ENCODE measurements at regions of chr2 and their contacts with region 1.

Region 1: GRCh38 chr2:136255648-136256463 is 137.9 kb upstream of the CXCR4 start:
- DNase-seq: peak; percentile 78
- ATAC-seq: peak; percentile 69
- H3K4me3 ChIP-seq: no peak overlapping the region
- H3K4me3 Mint-ChIP-seq: peak overlapping the region; percentile 64
- H3K27ac ChIP-seq: peak overlapping the region; percentile 43 to 74
- H3K27ac Mint-ChIP-seq: peak overlapping the region; percentile 92
- H3K4me1 ChIP-seq: peaks cover 55% of the 10 kb centered on the region in 2 donors
- H3K4me1 Mint-ChIP-seq: peaks cover 91% of the 10 kb centered on the region
- H3K27me3 ChIP-seq: no peaks in the 10 kb centered on the region
- H3K27me3 Mint-ChIP-seq: no peaks in the 10 kb centered on the region
- CTCF ChIP-seq: peak; percentile 24

Region 2: DNA sequence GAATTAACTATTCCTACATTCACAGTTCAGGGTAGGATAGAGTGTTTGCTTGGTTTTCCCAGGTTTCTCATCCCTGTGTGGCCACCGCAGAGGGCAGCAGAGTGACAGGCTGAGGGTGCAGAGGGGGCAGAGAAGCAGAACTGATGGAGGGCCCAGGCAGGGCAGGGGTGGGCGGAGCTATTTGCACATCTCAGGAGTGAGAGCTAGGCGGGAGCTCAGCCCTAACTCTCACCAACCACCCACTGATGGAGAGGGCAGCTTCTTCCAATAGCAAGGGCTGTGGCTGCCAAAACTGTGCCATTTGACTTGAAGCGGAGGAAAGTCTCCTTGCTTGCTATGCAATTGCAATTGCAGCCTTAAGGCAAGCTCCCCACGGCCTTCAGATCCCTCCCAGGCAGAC is 258.5 kb before region 1 on chr2:
- CTCF ChIA-PET with region 1: interaction called, 12 read pairs
- POLR2A ChIA-PET with region 1: no interaction called
- intact Hi-C with region 1: no loop called
- DNase-seq: peak; percentile 83
- ATAC-seq: peak; percentile 95
- H3K4me3 ChIP-seq: peak overlapping the region in 3 of 5 experiments; percentile 8 to 17 (median 10)
- H3K4me3 Mint-ChIP-seq: peak overlapping the region; percentile 74
- H3K27ac ChIP-seq: peak overlapping the region; percentile 47 to 50
- H3K27ac Mint-ChIP-seq: peak overlapping the region; percentile 79
- H3K4me1 ChIP-seq: peaks cover 52 to 57% of the 10 kb centered on the region in 2 donors
- H3K4me1 Mint-ChIP-seq: peaks cover 51% of the 10 kb centered on the region
- H3K27me3 ChIP-seq: no peaks in the 10 kb centered on the region
- H3K27me3 Mint-ChIP-seq: no peaks in the 10 kb centered on the region
- CTCF ChIP-seq: peak; percentile 26

Region 3: DNA sequence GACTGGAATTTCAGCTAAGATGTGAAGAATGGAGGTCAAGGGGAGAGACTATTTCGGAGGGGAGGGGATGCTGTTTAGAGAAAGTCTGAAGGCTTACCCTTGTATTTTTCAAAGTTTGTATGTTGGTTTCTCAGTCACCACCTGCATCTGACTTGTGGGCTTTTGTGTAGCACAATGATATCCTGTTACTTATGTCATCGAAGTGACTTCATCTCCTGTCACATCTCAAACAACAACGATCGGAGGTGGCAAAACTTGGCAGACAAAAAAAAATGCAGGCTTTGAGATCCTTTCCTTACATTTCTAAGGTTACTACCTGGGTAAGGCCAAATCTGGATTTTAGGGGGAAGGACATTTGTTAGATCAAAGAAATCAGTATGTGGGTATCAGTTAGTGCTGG is 126.3 kb before region 1 on chr2:
- CTCF ChIA-PET with region 1: interaction called, 15 read pairs
- POLR2A ChIA-PET with region 1: interaction called, 50 read pairs
- intact Hi-C with region 1: loop called (anchors 2 kb)
- DNase-seq: peak; percentile 73
- ATAC-seq: peak; percentile 2
- H3K4me3 ChIP-seq: peak overlapping the region in 2 of 5 experiments; percentile 4 to 11
- H3K4me3 Mint-ChIP-seq: peak overlapping the region; percentile 83
- H3K27ac ChIP-seq: peak overlapping the region; percentile 98 to 99
- H3K27ac Mint-ChIP-seq: peak overlapping the region; percentile 96
- H3K4me1 ChIP-seq: peaks cover 96 to 98% of the 10 kb centered on the region in 2 donors
- H3K4me1 Mint-ChIP-seq: peaks cover 94% of the 10 kb centered on the region
- H3K27me3 ChIP-seq: no peaks in the 10 kb centered on the region
- H3K27me3 Mint-ChIP-seq: no peaks in the 10 kb centered on the region
- CTCF ChIP-seq: no peak

Region 4: GRCh38 chr2:136207030-136207623 is 48.7 kb before region 1 on chr2:
- CTCF ChIA-PET with region 1: interaction called, 22 read pairs
- POLR2A ChIA-PET with region 1: interaction called, 34 read pairs
- intact Hi-C with region 1: loop called (anchors 1 kb)
- DNase-seq: peak; percentile 94
- ATAC-seq: peak; percentile 65
- H3K4me3 ChIP-seq: peak overlapping the region in 4 of 5 experiments; percentile 1 to 44 (median 26)
- H3K4me3 Mint-ChIP-seq: peak overlapping the region; percentile 84
- H3K27ac ChIP-seq: peak overlapping the region; percentile 98 to 99
- H3K27ac Mint-ChIP-seq: peak overlapping the region; percentile 99
- H3K4me1 ChIP-seq: peaks cover 70 to 74% of the 10 kb centered on the region in 2 donors
- H3K4me1 Mint-ChIP-seq: peaks cover 77% of the 10 kb centered on the region
- H3K27me3 ChIP-seq: no peaks in the 10 kb centered on the region
- H3K27me3 Mint-ChIP-seq: no peaks in the 10 kb centered on the region
- CTCF ChIP-seq: no peak

Region 5: DNA sequence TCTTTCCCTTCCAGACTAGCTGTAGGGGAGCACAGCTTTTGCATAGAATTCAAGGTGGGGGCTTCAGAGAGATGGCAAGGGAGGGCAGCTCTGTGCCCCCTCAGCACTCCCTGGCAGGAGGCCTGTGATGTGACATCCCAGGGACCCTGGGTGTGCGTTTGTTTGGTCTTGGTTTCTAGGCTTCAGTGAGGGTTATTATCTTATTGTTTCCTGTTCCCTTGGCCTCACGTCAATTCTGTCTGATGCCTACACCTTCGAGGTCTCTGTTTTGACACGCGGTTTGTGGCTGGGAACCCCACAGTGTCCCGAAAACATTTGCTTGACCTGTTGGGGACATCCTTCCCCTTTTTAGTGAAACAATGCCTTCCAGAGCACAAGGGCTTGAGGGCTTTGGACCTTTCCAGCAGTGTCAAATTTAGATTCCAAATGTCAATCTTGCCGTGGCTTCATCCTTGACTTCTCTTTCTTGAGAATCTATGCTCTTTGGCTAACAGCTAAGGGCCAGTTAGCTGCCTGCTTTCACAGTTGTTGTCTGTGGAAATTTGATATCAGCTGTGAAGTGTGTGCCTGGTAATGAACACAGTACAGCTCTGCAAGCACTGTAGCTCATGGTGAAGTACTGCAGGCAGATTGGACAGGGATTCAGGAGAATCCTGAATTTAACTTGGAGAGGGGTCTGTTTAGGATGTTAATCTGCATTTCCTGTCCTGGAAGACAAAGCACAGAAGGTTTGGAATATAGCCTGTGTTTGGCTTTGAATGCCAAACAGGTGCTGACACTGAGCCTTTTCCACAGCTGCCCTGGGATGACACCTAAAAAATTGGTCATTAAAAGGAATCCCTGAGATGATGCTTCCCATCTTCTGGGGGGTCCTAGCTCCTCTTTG is 29.7 kb before region 1 on chr2:
- CTCF ChIA-PET with region 1: interaction called, 19 read pairs
- POLR2A ChIA-PET with region 1: interaction called, 13 read pairs
- intact Hi-C with region 1: loop called (anchors 1 kb)
- DNase-seq: peak; percentile 88
- ATAC-seq: peak; percentile 84
- H3K4me3 ChIP-seq: no peak overlapping the region
- H3K4me3 Mint-ChIP-seq: peak overlapping the region; percentile 42
- H3K27ac ChIP-seq: peak overlapping the region; percentile 62 to 75
- H3K27ac Mint-ChIP-seq: peak overlapping the region; percentile 95
- H3K4me1 ChIP-seq: peaks cover 46 to 54% of the 10 kb centered on the region in 2 donors
- H3K4me1 Mint-ChIP-seq: peaks cover 75% of the 10 kb centered on the region
- H3K27me3 ChIP-seq: no peaks in the 10 kb centered on the region
- H3K27me3 Mint-ChIP-seq: no peaks in the 10 kb centered on the region
- CTCF ChIP-seq: no peak

Region 6: GRCh38 chr2:136310005-136310495 is 54.2 kb after region 1 on chr2:
- CTCF ChIA-PET with region 1: no interaction called
- POLR2A ChIA-PET with region 1: interaction called, 3 read pairs
- intact Hi-C with region 1: loop called (anchors 5 kb)
- DNase-seq: peak; percentile 26
- ATAC-seq: peak; percentile 37
- H3K4me3 ChIP-seq: no peak overlapping the region
- H3K4me3 Mint-ChIP-seq: peak overlapping the region; percentile 27
- H3K27ac ChIP-seq: no peak overlapping the region
- H3K27ac Mint-ChIP-seq: no peak overlapping the region
- H3K4me1 ChIP-seq: peaks cover 8 to 11% of the 10 kb centered on the region in 2 donors
- H3K4me1 Mint-ChIP-seq: peaks cover 32% of the 10 kb centered on the region
- H3K27me3 ChIP-seq: no peaks in the 10 kb centered on the region
- H3K27me3 Mint-ChIP-seq: no peaks in the 10 kb centered on the region
- CTCF ChIP-seq: no peak

Region 7: DNA sequence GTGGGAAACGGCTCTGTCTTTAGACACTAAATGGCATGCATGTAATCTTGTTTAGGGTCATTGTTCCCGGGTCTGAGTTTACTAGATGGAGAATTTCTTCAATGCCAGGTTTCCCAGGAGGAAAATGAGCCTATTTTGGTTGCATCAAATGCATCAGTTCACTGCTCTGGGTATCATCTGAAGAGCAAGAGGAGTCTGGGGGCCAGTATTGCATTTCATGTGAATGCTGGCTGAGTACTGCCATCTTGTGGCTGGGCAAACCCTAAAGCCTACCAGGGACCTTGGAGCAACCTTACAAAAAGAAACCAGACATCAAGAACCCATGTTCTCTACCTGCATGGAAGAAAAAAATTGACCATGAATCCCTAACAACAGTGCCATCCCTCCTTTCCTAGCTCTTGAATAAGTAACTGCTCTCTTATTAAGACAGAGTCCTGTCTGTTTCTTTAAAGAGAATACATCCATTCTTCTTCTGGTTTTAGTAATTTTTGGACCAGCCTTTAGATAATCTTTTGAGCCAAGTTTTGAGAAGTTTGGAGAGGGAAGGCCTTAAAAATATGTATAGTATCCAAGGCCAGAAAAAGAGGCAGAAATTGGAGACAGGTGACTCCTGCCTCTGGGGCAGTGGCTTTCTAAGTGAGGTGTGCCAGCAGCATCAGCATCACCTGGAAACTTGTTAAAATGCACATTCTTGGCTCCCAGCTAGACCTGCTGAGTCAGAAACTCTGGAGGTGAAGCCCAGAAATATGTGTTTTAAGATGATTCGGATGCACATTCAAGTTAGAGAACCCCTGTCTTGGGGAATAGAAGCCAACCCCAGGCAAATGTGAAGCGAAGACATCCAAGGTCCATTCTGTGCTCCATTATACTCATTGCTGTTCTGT is 123.1 kb after region 1 on chr2:
- CTCF ChIA-PET with region 1: interaction called, 137 read pairs
- POLR2A ChIA-PET with region 1: interaction called, 20 read pairs
- intact Hi-C with region 1: loop called (anchors 1 kb)
- DNase-seq: peak; percentile 90
- ATAC-seq: peak; percentile 29
- H3K4me3 ChIP-seq: peak overlapping the region in 1 of 5 experiments; percentile 8
- H3K4me3 Mint-ChIP-seq: peak overlapping the region; percentile 49
- H3K27ac ChIP-seq: peak overlapping the region in 1 of 2 donors; percentile 71
- H3K27ac Mint-ChIP-seq: peak overlapping the region; percentile 97
- H3K4me1 ChIP-seq: peaks cover 61 to 65% of the 10 kb centered on the region in 2 donors
- H3K4me1 Mint-ChIP-seq: peaks cover 81% of the 10 kb centered on the region
- H3K27me3 ChIP-seq: no peaks in the 10 kb centered on the region
- H3K27me3 Mint-ChIP-seq: no peaks in the 10 kb centered on the region
- CTCF ChIP-seq: peak; percentile 88

Region 8: GRCh38 chr2:136407952-136408318 is 152.1 kb after region 1 on chr2:
- CTCF ChIA-PET with region 1: no interaction called
- POLR2A ChIA-PET with region 1: no interaction called
- intact Hi-C with region 1: no loop called
- DNase-seq: no peak
- ATAC-seq: no peak
- H3K4me3 ChIP-seq: no peak overlapping the region
- H3K4me3 Mint-ChIP-seq: no peak overlapping the region
- H3K27ac ChIP-seq: no peak overlapping the region
- H3K27ac Mint-ChIP-seq: no peak overlapping the region
- H3K4me1 ChIP-seq: no peaks in the 10 kb centered on the region
- H3K4me1 Mint-ChIP-seq: peaks cover 6% of the 10 kb centered on the region
- H3K27me3 ChIP-seq: peaks cover 0 to 15% (median 2%) of the 10 kb centered on the region in 4 experiments
- H3K27me3 Mint-ChIP-seq: peaks cover 46% of the 10 kb centered on the region
- CTCF ChIP-seq: no peak

Measured in B cell (primary cell).